Left lung (tissue), 14 donors: ENCODE measurements at regions of chr17 and their contacts with region 1.

Region 1: DNA sequence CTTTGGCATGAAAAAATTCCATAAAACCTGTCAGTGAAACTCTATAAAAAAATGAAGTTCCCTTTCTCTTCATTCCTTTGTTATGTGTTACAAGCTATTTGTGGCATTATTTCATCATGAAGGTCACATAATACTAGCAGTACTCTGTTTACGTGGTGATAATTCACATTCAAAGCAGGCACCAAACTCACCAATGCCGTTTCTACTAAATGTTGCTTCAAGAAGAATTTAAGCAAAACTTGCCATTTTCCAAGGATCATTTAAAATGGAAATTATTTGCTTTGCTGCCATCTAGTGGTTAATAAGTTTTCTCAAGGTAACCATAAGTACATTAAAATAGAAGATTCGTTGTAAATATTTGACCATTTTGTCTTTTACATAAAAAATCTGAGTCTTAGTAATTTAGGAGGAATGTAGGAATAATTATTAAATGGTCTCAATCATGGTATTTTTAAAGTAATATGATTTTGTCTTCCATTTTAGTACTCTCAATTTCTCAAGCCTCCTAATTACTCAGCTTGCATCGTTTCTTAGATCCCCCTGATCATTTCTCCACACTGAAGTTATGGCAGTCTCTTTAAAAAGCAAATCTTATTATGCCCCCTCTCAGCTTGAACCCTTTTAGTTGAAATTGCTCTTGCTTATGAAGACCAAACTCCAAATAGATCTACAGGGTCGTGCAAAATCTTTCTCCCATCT is 80.8 kb downstream of the OMG start:
- DNase-seq: peak in 2 of 4 donors; percentile 36 to 55
- ATAC-seq: no peak
- H3K4me3 ChIP-seq: no peak overlapping the region
- H3K27ac ChIP-seq: no peak overlapping the region
- H3K4me1 ChIP-seq: no peaks in the 10 kb centered on the region
- H3K27me3 ChIP-seq: no peaks in the 10 kb centered on the region
- CTCF ChIP-seq: peak; percentile 56

Region 2: GRCh38 chr17:31015639-31016038 is 200.6 kb before region 1 on chr17:
- intact Hi-C with region 1: loop called in 1 of 2 experiments (anchors 10 kb)
- DNase-seq: no peak
- ATAC-seq: no peak
- H3K4me3 ChIP-seq: no peak overlapping the region
- H3K27ac ChIP-seq: no peak overlapping the region
- H3K4me1 ChIP-seq: no peaks in the 10 kb centered on the region
- H3K27me3 ChIP-seq: no peaks in the 10 kb centered on the region
- CTCF ChIP-seq: no peak